ENCODE measurements at regions of chr11 and their contacts with region 1.

Region 1: GRCh38 chr11:120354779-120355178 is 18.6 kb downstream of the ARHGEF12 start:
- DNase-seq: no peak
- ATAC-seq: peak in 1 of 4 donors; percentile 21
- H3K4me3 ChIP-seq: no peak overlapping the region
- H3K27ac ChIP-seq: no peak overlapping the region
- H3K4me1 ChIP-seq: peaks cover 0 to 82% (median 32%) of the 10 kb centered on the region in 12 donors
- H3K27me3 ChIP-seq: peaks cover 0 to 64% (median 0%) of the 10 kb centered on the region in 9 donors
- CTCF ChIP-seq: no peak
- POLR2A ChIP-seq: no peak

Region 2: DNA sequence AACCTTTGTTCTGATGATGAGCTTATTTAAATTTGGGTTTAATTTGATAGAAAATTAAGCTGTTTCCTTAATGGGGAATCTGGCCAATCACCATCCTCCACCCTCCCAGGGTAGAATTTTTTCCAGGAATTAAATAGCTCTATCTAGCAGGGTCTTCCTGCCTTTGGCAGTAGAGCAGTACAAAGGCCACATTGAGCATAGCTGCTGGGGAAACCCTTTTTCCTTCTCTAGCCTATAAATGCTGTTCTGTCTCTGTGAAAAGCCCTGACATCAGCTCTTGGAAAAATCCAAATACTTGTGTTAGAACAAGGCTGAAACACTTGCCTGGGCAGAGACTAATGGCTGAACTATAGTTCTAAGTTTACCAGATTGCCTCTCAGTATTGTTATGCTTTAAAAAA is 36.5 kb after region 1 on chr11:
- intact Hi-C with region 1: loop called in 3 of 10 experiments (anchors 5 to 10 kb)
- DNase-seq: peak in 1 of 5 donors; percentile 17
- ATAC-seq: peak in 3 of 4 donors; percentile 45 to 78 (median 48)
- H3K4me3 ChIP-seq: no peak overlapping the region
- H3K27ac ChIP-seq: peak overlapping the region in 10 of 12 donors; percentile 2 to 62 (median 40)
- H3K4me1 ChIP-seq: peaks cover 9 to 56% (median 32%) of the 10 kb centered on the region in 12 donors
- H3K27me3 ChIP-seq: no peaks in the 10 kb centered on the region
- CTCF ChIP-seq: no peak
- POLR2A ChIP-seq: no peak

Measured in heart left ventricle (tissue), 16 donors.